Activated CD8-positive, alpha-beta T cell treated with anti-CD3 and anti-CD28 coated beads, Interleukin-2, amount 10 ng/mL, durations not matched to agents 7 days and 5 days (primary cell): ENCODE measurements at regions of chr6 and their contacts with region 1.

Region 1: DNA sequence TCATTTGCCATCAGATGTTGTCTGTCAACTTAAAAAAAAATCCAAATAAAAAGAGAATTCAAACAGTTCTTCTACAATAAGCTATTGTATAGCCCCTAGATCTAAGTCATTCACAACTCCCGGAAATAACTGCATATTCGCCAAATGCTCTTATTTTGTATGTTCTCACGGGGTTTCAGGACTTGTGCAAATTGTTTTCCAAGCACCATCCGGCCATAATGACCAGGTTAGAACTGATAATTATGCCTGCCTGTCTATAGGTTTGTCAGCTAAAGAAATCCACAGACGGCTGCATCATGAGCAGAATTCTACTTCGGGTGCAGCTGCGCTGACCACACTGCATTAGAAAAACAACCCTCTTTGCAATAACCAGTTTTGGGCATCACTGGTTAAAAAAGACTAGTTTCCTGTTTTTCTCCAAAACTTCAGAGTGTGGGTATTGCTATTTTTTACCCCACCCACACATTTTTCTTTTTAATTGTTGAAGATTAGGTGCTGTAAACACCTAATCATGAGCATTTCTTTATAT is 87.7 kb downstream of the HIVEP2 start:
- DNase-seq: peak; percentile 43
- ATAC-seq: peak; percentile 24
- H3K4me3 Mint-ChIP-seq: peak overlapping the region; percentile 73
- H3K27ac Mint-ChIP-seq: peak overlapping the region; percentile 96
- H3K4me1 Mint-ChIP-seq: peaks cover 79% of the 10 kb centered on the region
- H3K27me3 Mint-ChIP-seq: no peaks in the 10 kb centered on the region

Region 2: GRCh38 chr6:142845624-142846458 is 11.5 kb before region 1 on chr6:
- CTCF ChIA-PET with region 1: interaction called, 25 read pairs
- POLR2A ChIA-PET with region 1: interaction called, 24 read pairs
- DNase-seq: peak; percentile 79
- ATAC-seq: peak; percentile 57
- H3K4me3 Mint-ChIP-seq: peak overlapping the region; percentile 85
- H3K27ac Mint-ChIP-seq: peak overlapping the region; percentile 95
- H3K4me1 Mint-ChIP-seq: peaks cover 79% of the 10 kb centered on the region
- H3K27me3 Mint-ChIP-seq: no peaks in the 10 kb centered on the region

Region 3: DNA sequence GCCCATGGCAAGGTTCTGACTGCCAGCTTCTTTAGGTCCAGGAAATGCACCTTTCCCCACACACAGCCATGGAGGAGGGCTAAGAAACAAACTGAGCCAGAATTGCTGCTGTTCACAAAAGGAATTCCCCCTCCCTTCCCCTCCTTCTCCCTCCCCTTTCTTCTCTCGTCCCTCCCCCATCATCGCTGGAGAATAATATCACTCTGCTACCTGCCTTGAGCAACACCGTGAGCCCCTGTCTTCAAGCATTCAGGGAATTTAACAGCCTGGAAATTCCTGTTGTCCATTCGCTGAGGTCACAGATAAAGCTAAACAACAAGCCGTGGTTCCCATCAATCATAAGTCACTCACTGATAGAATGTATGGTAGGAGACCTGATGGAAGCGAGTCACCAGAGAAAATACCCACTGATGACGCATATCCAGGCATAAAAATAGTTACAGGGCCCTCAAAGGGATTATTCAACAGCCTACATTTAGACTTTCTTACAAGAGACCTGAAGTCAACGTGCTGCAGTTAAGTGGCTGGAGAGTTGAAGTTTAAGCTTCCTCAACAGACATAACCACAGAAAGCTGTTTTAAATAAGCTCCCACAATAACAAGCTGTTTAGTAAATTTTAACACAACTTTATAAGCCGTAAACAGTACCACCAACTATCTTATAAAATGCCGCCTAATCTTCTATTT is 28.0 kb after region 1 on chr6:
- CTCF ChIA-PET with region 1: interaction called, 10 read pairs
- POLR2A ChIA-PET with region 1: interaction called, 19 read pairs
- DNase-seq: peak; percentile 58
- ATAC-seq: peak; percentile 83
- H3K4me3 Mint-ChIP-seq: peak overlapping the region; percentile 81
- H3K27ac Mint-ChIP-seq: peak overlapping the region; percentile 95
- H3K4me1 Mint-ChIP-seq: peaks cover 78% of the 10 kb centered on the region
- H3K27me3 Mint-ChIP-seq: no peaks in the 10 kb centered on the region

Region 4: DNA sequence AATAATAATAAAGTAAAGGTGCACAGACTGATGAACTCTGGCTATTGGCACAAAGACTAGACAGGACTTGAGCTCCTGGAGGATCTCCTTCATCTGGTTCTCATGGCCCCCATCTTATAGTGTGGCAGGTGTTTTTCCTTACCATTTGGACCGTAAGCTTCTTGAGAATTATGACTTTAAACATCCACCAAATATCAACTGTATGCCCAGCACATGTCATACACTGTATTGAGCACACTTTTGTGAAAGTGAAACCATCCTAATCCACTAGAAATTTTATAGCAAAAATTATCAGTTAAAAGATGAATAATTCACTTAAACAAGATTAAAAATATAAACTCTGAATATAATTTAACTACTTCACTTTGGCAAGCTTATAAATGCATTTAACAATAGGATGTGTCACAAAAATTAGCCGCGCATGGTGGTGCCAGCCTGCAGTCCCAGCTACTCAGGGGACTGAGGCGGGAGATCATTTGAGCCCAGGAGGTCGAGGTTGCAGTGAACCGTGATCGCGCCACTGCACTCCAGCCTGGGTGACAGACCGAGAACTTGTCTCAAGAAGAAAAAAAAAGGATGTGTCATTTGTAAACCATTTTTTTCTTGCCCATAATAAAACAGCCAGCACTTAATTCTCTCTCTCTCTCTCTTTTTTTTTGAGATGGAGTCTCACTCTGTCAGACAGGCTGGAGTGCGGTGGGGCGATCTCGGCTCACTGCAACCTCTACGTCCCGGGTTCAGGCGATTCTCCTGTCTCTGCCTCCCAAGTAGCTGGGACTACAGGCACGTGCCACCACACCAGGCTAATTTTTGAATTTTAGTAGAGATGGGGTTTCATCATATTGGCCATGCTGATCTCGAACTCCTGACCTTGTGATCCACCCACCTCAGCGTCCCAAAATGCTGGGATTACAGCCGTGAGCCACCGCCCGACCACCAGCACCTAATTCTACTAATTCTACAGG is 78.5 kb after region 1 on chr6:
- CTCF ChIA-PET with region 1: no interaction called
- POLR2A ChIA-PET with region 1: interaction called, 11 read pairs
- DNase-seq: peak; percentile 44
- ATAC-seq: peak; percentile 57
- H3K4me3 Mint-ChIP-seq: peak overlapping the region; percentile 79
- H3K27ac Mint-ChIP-seq: peak overlapping the region; percentile 90
- H3K4me1 Mint-ChIP-seq: peaks cover 81% of the 10 kb centered on the region
- H3K27me3 Mint-ChIP-seq: no peaks in the 10 kb centered on the region

Region 5: DNA sequence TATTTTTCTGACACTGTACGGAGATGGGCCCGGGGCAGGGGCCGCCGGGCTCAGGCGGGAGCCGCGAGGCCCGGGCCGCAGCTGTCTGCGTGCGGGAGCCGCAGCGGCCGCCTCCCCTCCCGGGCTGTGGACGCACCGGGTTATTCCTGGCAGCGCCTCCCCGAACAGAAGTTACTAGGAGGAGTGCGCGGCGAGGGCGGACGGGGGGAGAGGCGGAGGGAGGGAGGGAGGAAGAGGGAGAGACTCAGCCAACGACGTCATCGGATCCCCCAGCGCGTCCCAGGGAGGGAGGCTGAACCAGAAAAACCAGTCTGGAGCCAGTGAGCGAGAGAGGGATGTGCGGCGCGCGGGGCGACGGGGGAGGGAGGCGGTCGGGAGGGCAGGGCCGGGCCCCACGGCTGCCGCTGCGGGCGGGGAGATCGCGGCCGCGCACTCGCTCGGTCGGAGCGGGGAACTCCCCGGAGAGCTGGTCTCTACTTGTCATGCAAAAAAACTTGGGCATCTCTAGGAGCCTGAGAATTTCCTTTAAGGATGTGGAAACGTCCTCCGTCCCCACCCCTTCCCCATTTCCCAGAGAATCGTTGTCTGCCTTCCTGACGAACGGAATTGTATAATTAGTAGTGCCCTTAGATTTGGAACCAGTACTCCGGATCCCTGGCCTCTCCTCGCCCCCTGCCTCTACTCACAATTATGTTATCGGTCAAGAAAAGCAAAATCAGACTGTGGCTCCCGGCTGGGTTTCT is 89.1 kb after region 1 on chr6:
- CTCF ChIA-PET with region 1: interaction called, 3 read pairs
- POLR2A ChIA-PET with region 1: interaction called, 10 read pairs
- DNase-seq: peak; percentile 88
- ATAC-seq: peak; percentile 42
- H3K4me3 Mint-ChIP-seq: peak overlapping the region; percentile 100
- H3K27ac Mint-ChIP-seq: peak overlapping the region; percentile 94
- H3K4me1 Mint-ChIP-seq: peaks cover 38% of the 10 kb centered on the region
- H3K27me3 Mint-ChIP-seq: peaks cover 3% of the 10 kb centered on the region